Activated CD4-positive, alpha-beta memory T cell treated with anti-CD3 and anti-CD28 coated beads, Interleukin-2, amount 10 ng/mL, durations not matched to agents 7 days and 5 days (primary cell): ENCODE measurements at regions of chr2 and their contacts with region 1.

Region 1: DNA sequence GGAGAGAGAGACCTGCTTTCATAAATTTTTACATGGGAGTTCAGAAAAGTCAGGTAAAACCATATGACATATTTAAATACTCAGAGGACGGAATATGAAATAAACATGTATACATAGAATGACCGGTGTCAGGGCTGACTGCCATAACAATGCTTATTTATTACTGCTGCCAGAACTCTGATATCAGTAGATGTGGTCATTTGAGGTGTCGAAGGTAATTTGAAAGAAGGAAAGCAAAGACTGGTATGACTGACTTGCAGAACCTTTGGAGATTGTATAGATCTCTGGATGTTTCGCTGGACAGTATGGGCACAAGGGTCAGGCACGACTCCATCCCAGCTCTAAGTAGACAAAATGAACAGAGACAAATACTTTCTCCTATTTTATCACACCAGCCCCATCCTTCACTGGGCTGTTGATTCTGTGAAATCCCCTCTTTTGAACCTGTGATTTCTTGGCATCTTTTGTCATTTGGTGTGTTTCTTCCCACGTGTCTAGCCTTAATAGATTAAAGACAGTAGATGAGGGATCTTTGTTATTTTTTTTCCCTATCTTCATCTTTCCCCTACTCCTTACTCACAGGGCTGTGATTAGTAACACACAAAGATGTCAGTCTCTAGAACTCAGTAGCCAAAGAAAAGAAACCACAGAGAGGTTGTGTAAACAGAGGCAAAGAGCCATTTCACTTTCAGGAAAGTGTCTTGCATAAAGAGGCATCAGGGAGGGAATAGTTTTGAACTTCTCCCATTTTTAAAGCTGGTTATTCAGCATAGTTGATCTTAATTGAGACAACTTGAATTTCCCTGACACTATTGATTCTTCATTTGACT is 61.6 kb downstream of the ICOS start:
- DNase-seq: no peak
- H3K4me3 Mint-ChIP-seq: peak overlapping the region; percentile 29
- H3K27ac Mint-ChIP-seq: peak overlapping the region; percentile 61
- H3K4me1 Mint-ChIP-seq: peaks cover 63% of the 10 kb centered on the region
- H3K27me3 Mint-ChIP-seq: no peaks in the 10 kb centered on the region

Region 2: GRCh38 chr2:203949228-203949627 is 49.0 kb before region 1 on chr2:
- CTCF ChIA-PET with region 1: interaction called, 3 read pairs
- POLR2A ChIA-PET with region 1: interaction called, 12 read pairs
- DNase-seq: peak; percentile 33
- H3K4me3 Mint-ChIP-seq: peak overlapping the region; percentile 40
- H3K27ac Mint-ChIP-seq: peak overlapping the region; percentile 70
- H3K4me1 Mint-ChIP-seq: peaks cover 87% of the 10 kb centered on the region
- H3K27me3 Mint-ChIP-seq: no peaks in the 10 kb centered on the region

Region 3: GRCh38 chr2:204015118-204015843 is 17.1 kb after region 1 on chr2:
- CTCF ChIA-PET with region 1: interaction called, 4 read pairs
- POLR2A ChIA-PET with region 1: interaction called, 11 read pairs
- DNase-seq: peak; percentile 35
- H3K4me3 Mint-ChIP-seq: no peak overlapping the region
- H3K27ac Mint-ChIP-seq: peak overlapping the region; percentile 58
- H3K4me1 Mint-ChIP-seq: peaks cover 67% of the 10 kb centered on the region
- H3K27me3 Mint-ChIP-seq: no peaks in the 10 kb centered on the region

Region 4: GRCh38 chr2:204415406-204416181 is 417.4 kb after region 1 on chr2:
- CTCF ChIA-PET with region 1: no interaction called
- POLR2A ChIA-PET with region 1: no interaction called
- DNase-seq: no peak
- H3K4me3 Mint-ChIP-seq: no peak overlapping the region
- H3K27ac Mint-ChIP-seq: no peak overlapping the region
- H3K4me1 Mint-ChIP-seq: no peaks in the 10 kb centered on the region
- H3K27me3 Mint-ChIP-seq: peaks cover 3% of the 10 kb centered on the region